ENCODE measurements at regions of chr7 and their contacts with region 1.

Region 1: DNA sequence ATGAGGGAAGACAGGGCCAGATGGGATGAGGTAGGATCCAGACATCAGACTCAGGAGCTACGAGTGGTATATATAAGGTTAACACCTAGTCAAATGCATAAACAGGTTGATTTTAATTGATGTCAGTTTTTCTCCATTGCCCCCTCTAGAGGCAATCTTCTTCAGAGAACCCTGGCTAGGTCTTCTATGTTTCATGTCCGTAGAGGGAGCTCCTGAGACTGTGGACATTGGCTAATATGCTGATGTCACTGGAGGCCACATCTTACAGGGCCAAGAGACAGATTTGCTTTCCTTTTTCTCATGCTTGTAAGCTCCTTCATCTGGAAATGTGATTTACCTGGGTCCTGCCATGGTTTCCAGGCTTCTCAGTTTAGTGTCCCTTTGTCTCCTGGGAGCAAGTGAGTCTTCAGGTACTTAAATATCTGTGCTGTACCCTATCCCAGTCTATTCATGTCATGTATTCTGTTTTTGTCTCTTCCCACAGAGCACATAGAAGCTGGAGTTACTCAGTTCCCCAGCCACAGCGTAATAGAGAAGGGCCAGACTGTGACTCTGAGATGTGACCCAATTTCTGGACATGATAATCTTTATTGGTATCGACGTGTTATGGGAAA is 161.6 kb upstream of the PRSS1 start:
- DNase-seq: peak; percentile 31
- H3K4me3 ChIP-seq: no peak overlapping the region; a peak in 1 of 4 replicates
- H3K27ac ChIP-seq: no peak overlapping the region
- H3K4me1 ChIP-seq: peaks cover 0 to 6% of the 10 kb centered on the region in 2 experiments; a peak in 3 of 4 replicates
- H3K27me3 ChIP-seq: no peaks in the 10 kb centered on the region
- CTCF ChIP-seq: peak; percentile 64
- EP300 ChIP-seq: no peak
- RAD21 ChIP-seq: peak; percentile 40; the same call in 1 of the 2 replicates

Region 2: GRCh38 chr7:142088022-142088714 is 499.5 kb before region 1 on chr7:
- CTCF ChIA-PET with region 1: no interaction called
- POLR2A ChIA-PET with region 1: no interaction called
- DNase-seq: no peak
- H3K4me3 ChIP-seq: no peak overlapping the region
- H3K27ac ChIP-seq: no peak overlapping the region
- H3K4me1 ChIP-seq: no peaks in the 10 kb centered on the region; a peak in 1 of 4 replicates
- H3K27me3 ChIP-seq: no peaks in the 10 kb centered on the region
- CTCF ChIP-seq: no peak
- EP300 ChIP-seq: no peak
- RAD21 ChIP-seq: no peak

Region 3: GRCh38 chr7:142516038-142516501 is 71.6 kb before region 1 on chr7:
- CTCF ChIA-PET with region 1: interaction called, 12 read pairs
- POLR2A ChIA-PET with region 1: no interaction called
- DNase-seq: peak; percentile 69
- H3K4me3 ChIP-seq: peak overlapping the region in 1 of 2 experiments; percentile 20; a peak in 1 of 4 replicates
- H3K27ac ChIP-seq: no peak overlapping the region; a peak in 1 of 4 replicates
- H3K4me1 ChIP-seq: peaks cover 0 to 18% of the 10 kb centered on the region in 2 experiments; a peak in 2 of 4 replicates
- H3K27me3 ChIP-seq: peaks cover 33% of the 10 kb centered on the region
- CTCF ChIP-seq: peak; percentile 96
- EP300 ChIP-seq: no peak
- RAD21 ChIP-seq: peak; percentile 85

Region 4: GRCh38 chr7:142568435-142569097 is 19.1 kb before region 1 on chr7:
- CTCF ChIA-PET with region 1: interaction called, 12 read pairs
- POLR2A ChIA-PET with region 1: no interaction called
- DNase-seq: no peak
- H3K4me3 ChIP-seq: no peak overlapping the region
- H3K27ac ChIP-seq: peak overlapping the region in 1 of 2 experiments; percentile 61; a peak in 2 of 4 replicates
- H3K4me1 ChIP-seq: peaks cover 0 to 28% of the 10 kb centered on the region in 2 experiments; a peak in 3 of 4 replicates
- H3K27me3 ChIP-seq: no peaks in the 10 kb centered on the region
- CTCF ChIP-seq: no peak
- EP300 ChIP-seq: peak in 1 of 2 experiments; percentile 91; a peak in 2 of 4 replicates
- RAD21 ChIP-seq: no peak

Region 5: GRCh38 chr7:142598297-142598696 is 10.6 kb after region 1 on chr7:
- CTCF ChIA-PET with region 1: interaction called, 68 read pairs
- POLR2A ChIA-PET with region 1: no interaction called
- DNase-seq: no peak
- H3K4me3 ChIP-seq: no peak overlapping the region
- H3K27ac ChIP-seq: no peak overlapping the region
- H3K4me1 ChIP-seq: peaks cover 0 to 8% of the 10 kb centered on the region in 2 experiments; a peak in 1 of 4 replicates
- H3K27me3 ChIP-seq: peaks cover 12% of the 10 kb centered on the region; the same call in 1 of the 2 replicates
- CTCF ChIP-seq: no peak
- EP300 ChIP-seq: no peak
- RAD21 ChIP-seq: no peak

Region 6: DNA sequence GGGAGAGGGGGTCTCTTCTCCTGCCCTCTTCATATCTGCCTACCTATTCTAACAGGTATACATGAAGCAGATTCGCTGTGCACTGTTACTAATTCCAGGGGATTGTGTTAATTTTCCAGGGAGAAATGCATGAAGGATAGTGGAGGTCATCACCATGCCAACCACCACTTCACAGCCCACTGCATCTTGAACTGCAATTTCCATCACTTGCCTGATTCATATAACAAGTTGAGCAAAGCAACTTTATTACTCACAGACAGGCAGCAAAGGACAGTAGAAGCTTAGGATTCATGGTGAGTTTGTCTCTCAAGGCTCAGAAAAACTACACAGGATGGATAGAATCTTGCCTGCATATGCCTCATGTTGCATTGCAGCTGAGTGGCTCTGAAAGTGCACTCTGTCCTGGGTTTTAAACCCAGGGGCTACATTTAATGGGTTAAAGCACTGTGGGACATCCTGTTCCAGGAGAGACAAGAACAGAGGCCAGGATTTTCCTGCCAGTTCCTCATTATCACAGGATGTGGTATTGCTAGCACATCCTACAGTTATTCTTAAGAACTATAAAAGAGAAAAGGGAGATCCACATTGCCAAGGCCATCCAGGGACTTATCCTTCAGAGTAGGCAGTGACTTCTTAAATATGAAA is 24.7 kb after region 1 on chr7:
- CTCF ChIA-PET with region 1: interaction called, 10 read pairs
- POLR2A ChIA-PET with region 1: no interaction called
- DNase-seq: peak; percentile 63
- H3K4me3 ChIP-seq: no peak overlapping the region
- H3K27ac ChIP-seq: peak overlapping the region in 1 of 2 experiments; percentile 98; a peak in 3 of 4 replicates
- H3K4me1 ChIP-seq: peaks cover 0 to 17% of the 10 kb centered on the region in 2 experiments; a peak in 2 of 4 replicates
- H3K27me3 ChIP-seq: no peaks in the 10 kb centered on the region; the same call in 1 of the 2 replicates
- CTCF ChIP-seq: no peak
- EP300 ChIP-seq: peak; percentile 23 to 68; a peak in 2 of 4 replicates
- RAD21 ChIP-seq: no peak